ENCODE measurements at regions of chr9 and their contacts with region 1.

Region 1: GRCh38 chr9:113591001-113591898 is 127.7 kb downstream of the RGS3 start:
- DNase-seq: peak; percentile 89
- ATAC-seq: peak; percentile 44

Region 2: GRCh38 chr9:113657703-113658544 is 66.7 kb after region 1 on chr9:
- intact Hi-C with region 1: loop called (anchors 1 kb)
- DNase-seq: peak; percentile 88
- ATAC-seq: peak; percentile 82